ENCODE measurements at regions of chr3 and their contacts with region 1.

Region 1: GRCh38 chr3:43215663-43216275 is 70.6 kb upstream of the SNRK start:
- DNase-seq: peak in 2 of 9 experiments; percentile 30 to 49
- ATAC-seq: peak; percentile 39
- H3K4me3 ChIP-seq: no peak overlapping the region
- H3K4me3 Mint-ChIP-seq: no peak overlapping the region
- H3K27ac ChIP-seq: peak overlapping the region in 1 of 2 experiments; percentile 3
- H3K27ac Mint-ChIP-seq: peak overlapping the region; percentile 82
- H3K4me1 ChIP-seq: peaks cover 47% of the 10 kb centered on the region
- H3K4me1 Mint-ChIP-seq: peaks cover 53% of the 10 kb centered on the region
- H3K27me3 ChIP-seq: no peaks in the 10 kb centered on the region
- H3K27me3 Mint-ChIP-seq: no peaks in the 10 kb centered on the region
- CTCF ChIP-seq: peak; percentile 23

Region 2: DNA sequence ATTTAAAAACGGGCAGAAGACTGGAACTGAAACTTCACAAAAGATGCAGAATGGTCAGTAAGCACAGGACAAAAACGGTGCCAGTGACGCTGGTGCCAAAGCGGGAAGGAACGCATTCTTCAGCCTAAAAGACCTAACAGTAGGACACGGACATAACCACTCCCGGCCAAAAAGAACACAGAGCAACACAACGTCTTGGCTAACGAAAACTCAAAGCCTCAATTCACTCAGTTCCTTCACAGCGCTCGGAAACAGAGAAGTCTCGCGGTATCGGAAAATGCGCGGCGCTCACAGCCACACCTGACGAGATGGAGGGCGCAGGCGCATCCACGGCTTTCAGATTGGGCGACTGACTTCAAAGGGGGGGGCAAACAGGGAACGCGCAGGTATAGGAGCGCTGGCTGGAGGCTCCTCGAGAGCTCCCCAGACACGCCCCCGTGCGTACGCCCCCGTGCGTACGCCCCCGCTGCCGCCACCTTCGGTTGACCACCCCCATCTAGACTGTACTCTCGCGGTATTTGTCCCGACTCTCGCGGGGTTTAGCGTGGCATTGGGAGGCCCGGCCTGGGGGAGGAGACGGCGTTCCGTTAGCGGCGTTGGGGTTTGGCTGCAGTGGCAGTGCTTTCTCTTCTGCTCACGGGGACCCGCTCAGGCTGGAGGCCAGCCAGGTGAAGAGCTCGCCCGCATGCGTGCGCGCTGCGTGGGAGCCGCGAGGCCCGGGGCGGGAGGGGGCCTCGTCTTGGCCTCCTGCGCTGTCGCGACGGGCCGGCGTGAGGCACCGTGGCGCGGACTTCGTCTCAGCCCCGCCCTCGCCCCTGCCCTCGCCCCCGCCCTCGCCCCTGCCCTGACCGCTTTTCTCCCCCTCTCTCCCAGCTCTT is 615.4 kb before region 1 on chr3 and contains the start of gene NKTR:
- CTCF ChIA-PET with region 1: no interaction called
- POLR2A ChIA-PET with region 1: no interaction called
- intact Hi-C with region 1: no loop called
- DNase-seq: peak; percentile 99 to 100 (median 100)
- ATAC-seq: peak; percentile 94
- H3K4me3 ChIP-seq: peak within 1 kb of the TSS; percentile 56 to 96
- H3K4me3 Mint-ChIP-seq: peak within 1 kb of the TSS; percentile 93
- H3K27ac ChIP-seq: peak within 1 kb of the TSS; percentile 69 to 81
- H3K27ac Mint-ChIP-seq: peak within 1 kb of the TSS; percentile 97
- H3K4me1 ChIP-seq: peaks cover 22% of the 10 kb centered on the region
- H3K4me1 Mint-ChIP-seq: peaks cover 39% of the 10 kb centered on the region
- H3K27me3 ChIP-seq: no peaks in the 10 kb centered on the region
- H3K27me3 Mint-ChIP-seq: no peaks in the 10 kb centered on the region
- CTCF ChIP-seq: no peak
- total RNA-seq, gene NKTR: 190 to 204 TPM

Region 3: DNA sequence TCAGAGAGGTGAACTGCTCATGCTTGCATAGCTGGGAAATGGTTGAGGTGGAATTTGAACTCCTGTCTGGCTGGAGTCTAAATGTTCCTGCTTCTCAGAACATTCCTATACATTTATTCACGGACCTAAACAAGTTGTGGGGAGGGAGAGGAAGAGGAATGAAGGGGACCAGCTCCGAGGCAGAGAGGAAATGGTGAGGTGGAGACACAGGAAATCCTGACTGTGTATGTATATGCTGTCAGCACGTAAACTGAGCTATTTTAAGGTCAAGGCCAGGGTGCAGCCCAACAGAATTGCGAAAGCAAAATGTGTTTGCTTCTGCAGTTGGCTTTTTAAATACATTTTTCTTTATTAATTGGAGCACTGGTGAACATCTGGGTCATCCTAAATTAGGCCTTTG is 35.7 kb before region 1 on chr3:
- CTCF ChIA-PET with region 1: interaction called, 3 read pairs
- POLR2A ChIA-PET with region 1: no interaction called
- intact Hi-C with region 1: loop called in 1 of 2 experiments (anchors 5 kb)
- DNase-seq: peak in 8 of 9 experiments; percentile 27 to 78 (median 54)
- ATAC-seq: peak; percentile 91
- H3K4me3 ChIP-seq: peak overlapping the region; percentile 10 to 32
- H3K4me3 Mint-ChIP-seq: peak overlapping the region; percentile 77
- H3K27ac ChIP-seq: peak overlapping the region; percentile 49 to 90
- H3K27ac Mint-ChIP-seq: peak overlapping the region; percentile 97
- H3K4me1 ChIP-seq: peaks cover 40% of the 10 kb centered on the region
- H3K4me1 Mint-ChIP-seq: peaks cover 62% of the 10 kb centered on the region
- H3K27me3 ChIP-seq: no peaks in the 10 kb centered on the region
- H3K27me3 Mint-ChIP-seq: no peaks in the 10 kb centered on the region
- CTCF ChIP-seq: no peak

Region 4: GRCh38 chr3:43194490-43195114 is 21.2 kb before region 1 on chr3:
- CTCF ChIA-PET with region 1: interaction called, 3 read pairs
- POLR2A ChIA-PET with region 1: interaction called, 4 read pairs
- intact Hi-C with region 1: loop called in 1 of 2 experiments (anchors 1 kb)
- DNase-seq: peak in 8 of 9 experiments; percentile 16 to 72 (median 50)
- ATAC-seq: peak; percentile 90
- H3K4me3 ChIP-seq: no peak overlapping the region
- H3K4me3 Mint-ChIP-seq: peak overlapping the region; percentile 59
- H3K27ac ChIP-seq: peak overlapping the region; percentile 43 to 78
- H3K27ac Mint-ChIP-seq: peak overlapping the region; percentile 97
- H3K4me1 ChIP-seq: peaks cover 80% of the 10 kb centered on the region
- H3K4me1 Mint-ChIP-seq: peaks cover 88% of the 10 kb centered on the region
- H3K27me3 ChIP-seq: no peaks in the 10 kb centered on the region
- H3K27me3 Mint-ChIP-seq: no peaks in the 10 kb centered on the region
- CTCF ChIP-seq: no peak

Region 5: DNA sequence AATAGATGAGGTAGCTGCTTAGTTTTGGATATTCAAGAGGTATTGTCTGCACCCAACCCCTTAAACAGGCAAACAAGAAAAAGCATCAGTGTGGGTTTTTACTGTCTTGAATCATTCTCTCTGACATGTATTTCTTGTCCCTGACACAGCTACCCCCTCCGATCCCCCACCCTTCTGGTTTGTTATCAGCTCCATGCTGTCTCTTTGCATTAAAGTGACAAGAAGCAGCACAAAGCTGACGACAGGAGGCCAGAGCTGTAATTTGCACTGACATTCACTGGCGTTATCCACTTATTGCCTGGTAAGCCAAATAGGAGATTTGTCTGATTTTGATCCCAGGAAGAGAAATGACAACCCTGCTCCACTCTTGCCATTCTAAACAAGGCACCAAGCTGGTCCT is 12.7 kb before region 1 on chr3:
- CTCF ChIA-PET with region 1: interaction called, 7 read pairs
- POLR2A ChIA-PET with region 1: no interaction called
- intact Hi-C with region 1: loop called in 1 of 2 experiments (anchors 1 kb)
- DNase-seq: peak in 1 of 9 experiments; percentile 44
- ATAC-seq: no peak
- H3K4me3 ChIP-seq: no peak overlapping the region
- H3K4me3 Mint-ChIP-seq: no peak overlapping the region
- H3K27ac ChIP-seq: no peak overlapping the region
- H3K27ac Mint-ChIP-seq: no peak overlapping the region
- H3K4me1 ChIP-seq: peaks cover 16% of the 10 kb centered on the region
- H3K4me1 Mint-ChIP-seq: peaks cover 30% of the 10 kb centered on the region
- H3K27me3 ChIP-seq: no peaks in the 10 kb centered on the region
- H3K27me3 Mint-ChIP-seq: no peaks in the 10 kb centered on the region
- CTCF ChIP-seq: no peak

Measured in CD8-positive, alpha-beta T cell (primary cell).